ENCODE measurements at regions of chr11 and their contacts with region 1.

Region 1: GRCh38 chr11:22079133-22079872 is 113.6 kb upstream of the ANO5 start:
- DNase-seq: no peak
- ATAC-seq: no peak
- H3K4me3 ChIP-seq: no peak overlapping the region
- H3K27ac ChIP-seq: no peak overlapping the region
- H3K4me1 ChIP-seq: no peaks in the 10 kb centered on the region
- H3K27me3 ChIP-seq: no peaks in the 10 kb centered on the region
- CTCF ChIP-seq: no peak
- POLR2A ChIP-seq: no peak
- RAD21 ChIP-seq: no peak

Region 2: GRCh38 chr11:21411104-21411503 is 668.2 kb before region 1 on chr11:
- CTCF ChIA-PET with region 1: no interaction called
- POLR2A ChIA-PET with region 1: no interaction called
- RAD21 ChIA-PET with region 1: no interaction called
- intact Hi-C with region 1: loop called (anchors 10 kb)
- DNase-seq: no peak
- ATAC-seq: no peak
- H3K4me3 ChIP-seq: no peak overlapping the region
- H3K27ac ChIP-seq: no peak overlapping the region
- H3K4me1 ChIP-seq: no peaks in the 10 kb centered on the region
- H3K27me3 ChIP-seq: no peaks in the 10 kb centered on the region
- CTCF ChIP-seq: no peak
- POLR2A ChIP-seq: no peak
- RAD21 ChIP-seq: no peak

Region 3: DNA sequence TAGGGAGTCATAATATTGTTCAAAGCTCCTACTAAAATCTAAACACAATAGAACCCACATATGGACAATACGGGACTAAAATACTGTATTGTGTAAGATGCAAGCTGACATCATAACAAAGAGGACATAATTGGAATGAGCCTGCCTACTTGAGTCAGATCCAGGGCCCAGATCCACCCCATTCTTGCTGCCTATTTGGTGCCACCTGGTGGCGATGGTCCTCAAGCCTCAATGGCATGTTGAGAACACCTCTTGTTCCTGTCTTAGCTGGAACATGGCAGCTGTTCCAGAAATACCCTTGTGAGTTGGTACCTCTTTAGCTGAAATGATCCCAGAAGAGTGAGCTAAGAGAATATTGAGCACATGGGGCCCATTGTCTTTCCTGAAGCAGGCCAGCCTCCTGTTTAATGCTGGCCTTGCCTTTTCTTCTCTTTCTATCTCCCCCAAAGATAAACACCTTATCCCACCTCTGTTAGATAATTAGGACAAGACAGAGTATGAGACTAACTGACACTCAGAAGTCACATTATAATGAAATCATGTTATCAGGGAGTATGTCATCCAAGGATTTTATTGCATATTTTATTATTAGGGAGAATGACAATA is 567.4 kb before region 1 on chr11:
- CTCF ChIA-PET with region 1: no interaction called
- POLR2A ChIA-PET with region 1: no interaction called
- RAD21 ChIA-PET with region 1: no interaction called
- intact Hi-C with region 1: no loop called
- DNase-seq: peak; percentile 3
- ATAC-seq: peak; percentile 40; the same call in 1 of the 2 replicates
- H3K4me3 ChIP-seq: no peak overlapping the region
- H3K27ac ChIP-seq: no peak overlapping the region
- H3K4me1 ChIP-seq: no peaks in the 10 kb centered on the region
- H3K27me3 ChIP-seq: no peaks in the 10 kb centered on the region
- CTCF ChIP-seq: peak in 2 of 3 experiments; percentile 50 to 51; a peak in 2 of 6 replicates
- POLR2A ChIP-seq: no peak
- RAD21 ChIP-seq: peak; percentile 22; the same call in 1 of the 2 replicates

Region 4: DNA sequence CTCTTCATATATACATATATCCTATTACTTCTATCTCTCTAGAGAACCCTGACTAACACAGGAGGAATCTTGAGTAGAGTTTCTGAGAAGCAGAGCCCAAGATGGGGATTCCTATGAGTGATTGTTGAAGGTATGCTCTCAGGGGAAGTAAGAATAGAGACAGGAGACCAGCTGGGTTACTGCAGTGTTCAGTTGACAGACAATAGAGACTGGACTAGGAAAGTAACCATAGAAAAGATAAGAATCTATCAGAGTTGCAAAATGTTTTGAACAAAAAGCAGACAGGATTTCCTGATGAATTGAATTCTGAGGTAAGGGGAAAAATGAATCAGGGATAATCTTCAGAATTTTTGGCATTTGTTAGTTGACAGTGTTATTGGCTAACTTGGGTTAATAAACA is 313.3 kb after region 1 on chr11:
- CTCF ChIA-PET with region 1: no interaction called
- POLR2A ChIA-PET with region 1: no interaction called
- RAD21 ChIA-PET with region 1: no interaction called
- intact Hi-C with region 1: no loop called
- DNase-seq: no peak
- ATAC-seq: no peak
- H3K4me3 ChIP-seq: no peak overlapping the region
- H3K27ac ChIP-seq: no peak overlapping the region
- H3K4me1 ChIP-seq: no peaks in the 10 kb centered on the region
- H3K27me3 ChIP-seq: no peaks in the 10 kb centered on the region
- CTCF ChIP-seq: no peak
- POLR2A ChIP-seq: no peak
- RAD21 ChIP-seq: no peak

Measured in HCT116 (cell line).